HAP-1 (cell line): ENCODE measurements at regions of chr9 and their contacts with region 1.

Region 1: GRCh38 chr9:6305954-6306563 is 22.1 kb upstream of the TPD52L3 start:
- DNase-seq: peak in 1 of 2 experiments; percentile 49
- H3K4me3 ChIP-seq: no peak overlapping the region
- H3K4me1 ChIP-seq: no peaks in the 10 kb centered on the region
- H3K27me3 ChIP-seq: peaks cover 4% of the 10 kb centered on the region; the same call in 1 of the 2 replicates

Region 2: GRCh38 chr9:5886114-5886939 is 419.7 kb before region 1 on chr9:
- in situ Hi-C with region 1: loop called (anchors 25 kb)
- DNase-seq: peak; percentile 72 to 92
- H3K4me3 ChIP-seq: no peak overlapping the region
- H3K4me1 ChIP-seq: no peaks in the 10 kb centered on the region
- H3K27me3 ChIP-seq: no peaks in the 10 kb centered on the region

Region 3: GRCh38 chr9:5958273-5958672 is 347.8 kb before region 1 on chr9:
- in situ Hi-C with region 1: no loop called
- DNase-seq: no peak
- H3K4me3 ChIP-seq: no peak overlapping the region
- H3K4me1 ChIP-seq: peaks cover 3% of the 10 kb centered on the region; the same call in 1 of the 2 replicates
- H3K27me3 ChIP-seq: no peaks in the 10 kb centered on the region

Region 4: GRCh38 chr9:6055213-6055612 is 250.8 kb before region 1 on chr9:
- in situ Hi-C with region 1: loop called (anchors 25 kb)
- DNase-seq: peak; percentile 49 to 66
- H3K4me3 ChIP-seq: no peak overlapping the region
- H3K4me1 ChIP-seq: no peaks in the 10 kb centered on the region
- H3K27me3 ChIP-seq: no peaks in the 10 kb centered on the region